Endothelial cell of umbilical vein (primary cell): ENCODE measurements at regions of chr2 and their contacts with region 1.

Region 1: DNA sequence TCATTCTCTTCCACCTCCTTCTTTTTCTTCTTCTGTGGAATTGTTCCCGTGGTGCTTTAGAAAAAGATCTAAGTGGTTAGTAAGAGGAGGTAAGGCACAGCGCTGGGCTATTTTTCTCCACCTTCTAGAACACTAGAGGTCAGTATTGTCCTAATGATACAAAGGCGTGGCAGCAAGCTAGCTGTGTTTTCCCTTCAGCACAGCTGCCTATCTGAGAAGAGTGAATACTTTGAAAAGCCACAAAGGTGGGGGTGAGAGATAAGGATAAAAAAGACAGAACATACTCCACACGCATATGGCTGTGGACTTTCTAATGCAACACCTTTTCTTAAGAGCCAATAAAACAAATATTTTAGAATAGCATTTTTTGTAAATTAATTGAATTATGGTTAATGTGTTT is 2.1 kb downstream of the CNTNAP5 start:
- DNase-seq: peak; percentile 9
- H3K4me3 ChIP-seq: no peak overlapping the region
- H3K27ac ChIP-seq: no peak overlapping the region
- H3K4me1 ChIP-seq: no peaks in the 10 kb centered on the region
- H3K27me3 ChIP-seq: no peaks in the 10 kb centered on the region
- CTCF ChIP-seq: peak; percentile 26 to 37
- POLR2A ChIP-seq: no peak

Region 2: DNA sequence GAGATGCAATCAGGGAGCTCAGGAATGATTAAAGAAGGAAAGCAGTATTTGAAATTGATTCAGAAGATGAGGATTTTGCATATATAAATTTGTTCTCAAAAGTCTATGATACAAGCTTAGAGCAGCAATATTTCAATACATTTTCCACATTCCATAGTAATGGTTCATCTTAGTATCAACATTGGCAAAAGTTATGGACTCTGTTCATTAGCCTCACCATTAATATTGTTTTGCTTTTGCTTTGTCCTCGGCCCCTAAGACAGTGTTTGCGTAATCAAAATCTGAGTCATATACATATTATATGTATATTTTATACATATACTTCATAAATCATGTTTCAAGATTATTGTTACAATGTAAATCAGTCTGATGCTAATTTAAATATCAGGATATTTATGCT is 174.5 kb after region 1 on chr2:
- CTCF ChIA-PET with region 1: no interaction called
- POLR2A ChIA-PET with region 1: no interaction called
- dilution Hi-C with region 1: no loop called
- intact Hi-C with region 1: loop called (anchors 1 kb)
- DNase-seq: no peak
- H3K4me3 ChIP-seq: no peak overlapping the region
- H3K27ac ChIP-seq: no peak overlapping the region
- H3K4me1 ChIP-seq: no peaks in the 10 kb centered on the region
- H3K27me3 ChIP-seq: no peaks in the 10 kb centered on the region
- CTCF ChIP-seq: no peak
- POLR2A ChIP-seq: no peak